Activated CD4-positive, alpha-beta memory T cell treated with anti-CD3 and anti-CD28 coated beads for 36 hours (primary cell): ENCODE measurements at regions of chr2 and their contacts with region 1.

Region 1: GRCh38 chr2:234102112-234102511 is 51.6 kb downstream of the SPP2 start:
- DNase-seq: no peak
- H3K4me3 Mint-ChIP-seq: no peak overlapping the region
- H3K27ac Mint-ChIP-seq: no peak overlapping the region
- H3K4me1 Mint-ChIP-seq: peaks cover 32% of the 10 kb centered on the region
- H3K27me3 Mint-ChIP-seq: no peaks in the 10 kb centered on the region

Region 2: GRCh38 chr2:233976690-233977294 is 125.3 kb before region 1 on chr2:
- CTCF ChIA-PET with region 1: no interaction called
- POLR2A ChIA-PET with region 1: no interaction called
- intact Hi-C with region 1: loop called (anchors 5 kb)
- DNase-seq: no peak
- H3K4me3 Mint-ChIP-seq: no peak overlapping the region
- H3K27ac Mint-ChIP-seq: no peak overlapping the region
- H3K4me1 Mint-ChIP-seq: peaks cover 37% of the 10 kb centered on the region
- H3K27me3 Mint-ChIP-seq: no peaks in the 10 kb centered on the region

Region 3: DNA sequence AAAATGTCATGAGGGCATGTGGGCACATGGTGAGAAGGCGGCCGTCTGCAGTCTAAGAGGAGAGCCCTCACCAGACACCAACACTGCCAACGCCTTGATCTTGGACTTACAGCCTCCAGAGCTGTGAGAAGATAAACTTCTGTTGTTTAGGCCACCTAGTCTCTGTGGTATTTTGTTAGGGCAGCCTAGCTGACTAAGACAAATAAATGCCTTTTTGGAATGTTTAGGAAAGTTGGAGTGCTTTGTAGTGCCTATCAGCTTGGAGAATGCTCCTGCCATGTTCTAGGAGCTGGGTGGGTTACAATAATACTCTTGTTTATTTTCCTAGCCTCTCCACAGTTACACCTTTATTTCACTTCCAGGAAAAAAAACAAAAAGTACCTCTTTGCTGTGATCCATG is 40.4 kb after region 1 on chr2:
- CTCF ChIA-PET with region 1: no interaction called
- POLR2A ChIA-PET with region 1: no interaction called
- intact Hi-C with region 1: no loop called
- DNase-seq: no peak
- H3K4me3 Mint-ChIP-seq: no peak overlapping the region
- H3K27ac Mint-ChIP-seq: no peak overlapping the region
- H3K4me1 Mint-ChIP-seq: peaks cover 13% of the 10 kb centered on the region
- H3K27me3 Mint-ChIP-seq: no peaks in the 10 kb centered on the region

Region 4: DNA sequence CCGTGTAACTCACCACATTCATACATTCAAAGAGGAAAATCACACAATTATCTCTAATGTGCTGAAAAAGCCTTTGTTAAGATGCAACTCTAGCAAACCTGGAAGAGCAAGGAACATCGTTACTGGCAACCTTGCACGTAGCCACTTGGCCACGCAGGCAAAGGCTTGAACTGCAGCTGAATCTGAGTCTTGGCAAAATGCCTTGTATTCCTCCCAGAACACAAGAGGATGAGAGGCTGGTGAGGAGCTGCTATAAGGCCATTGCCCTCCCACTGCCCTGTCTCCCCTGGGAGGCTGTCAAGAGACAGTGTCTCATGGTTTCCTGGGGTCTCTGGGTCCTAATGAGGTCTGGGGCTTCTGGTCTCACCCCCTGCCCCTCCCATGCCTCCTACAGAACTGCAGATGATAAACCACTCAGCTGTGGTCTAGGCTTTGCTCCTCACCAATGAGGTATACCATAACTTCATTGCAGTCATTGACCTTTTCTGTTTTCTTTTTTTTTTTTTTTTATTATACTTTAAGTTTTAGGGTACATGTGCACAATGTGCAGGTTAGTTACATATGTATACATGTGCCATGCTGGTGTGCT is 89.8 kb after region 1 on chr2:
- CTCF ChIA-PET with region 1: no interaction called
- POLR2A ChIA-PET with region 1: no interaction called
- intact Hi-C with region 1: no loop called
- DNase-seq: no peak
- H3K4me3 Mint-ChIP-seq: no peak overlapping the region
- H3K27ac Mint-ChIP-seq: no peak overlapping the region
- H3K4me1 Mint-ChIP-seq: no peaks in the 10 kb centered on the region
- H3K27me3 Mint-ChIP-seq: peaks cover 1% of the 10 kb centered on the region

Region 5: GRCh38 chr2:234286118-234286598 is 184.0 kb after region 1 on chr2:
- CTCF ChIA-PET with region 1: no interaction called
- POLR2A ChIA-PET with region 1: no interaction called
- intact Hi-C with region 1: no loop called
- DNase-seq: peak; percentile 62
- H3K4me3 Mint-ChIP-seq: no peak overlapping the region
- H3K27ac Mint-ChIP-seq: peak overlapping the region; percentile 54
- H3K4me1 Mint-ChIP-seq: peaks cover 43% of the 10 kb centered on the region
- H3K27me3 Mint-ChIP-seq: no peaks in the 10 kb centered on the region